ENCODE measurements at regions of chr2 and their contacts with region 1.

Region 1: DNA sequence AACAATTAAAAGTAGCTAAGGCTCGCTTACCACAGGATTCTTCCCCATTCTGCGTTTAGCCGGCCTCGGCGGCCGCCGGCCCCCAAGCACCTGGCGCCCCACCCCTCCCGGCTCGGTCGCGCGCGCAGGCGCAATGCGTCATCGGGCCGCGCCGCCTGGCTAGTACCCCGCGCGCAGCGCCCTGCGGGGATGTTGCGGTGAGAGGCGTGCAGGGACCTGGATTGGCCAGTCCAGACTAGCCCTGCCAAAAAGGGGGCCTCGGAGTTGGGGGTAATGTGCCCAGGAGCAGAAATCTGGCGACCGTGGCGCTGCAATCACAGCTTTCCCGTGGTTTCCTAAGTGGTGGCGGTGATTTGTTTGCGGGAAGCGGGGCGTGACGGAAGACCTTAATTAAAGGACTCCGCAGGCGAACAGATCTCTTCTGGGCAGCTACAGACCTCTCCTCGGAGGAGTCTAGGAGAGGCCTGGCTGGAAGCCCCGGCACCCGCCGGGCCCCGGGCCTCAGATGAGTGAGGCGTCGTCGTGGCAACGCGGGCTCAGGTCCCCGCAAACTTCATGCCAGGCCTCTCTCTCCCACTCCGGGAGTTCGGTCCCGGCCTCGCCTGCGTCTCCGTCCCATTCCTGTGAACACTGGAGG is 606 bp downstream of the TMEM237 start:
- DNase-seq: peak; percentile 92
- ATAC-seq: peak; percentile 86
- H3K4me3 ChIP-seq: peak overlapping the region; percentile 73 to 100 (median 95)
- H3K4me3 Mint-ChIP-seq: peak overlapping the region; percentile 96
- H3K27ac ChIP-seq: peak overlapping the region; percentile 89 to 93
- H3K27ac Mint-ChIP-seq: peak overlapping the region; percentile 97
- H3K4me1 ChIP-seq: peaks cover 10 to 14% of the 10 kb centered on the region in 2 donors
- H3K4me1 Mint-ChIP-seq: peaks cover 12% of the 10 kb centered on the region
- H3K27me3 ChIP-seq: peaks cover 0 to 2% (median 0%) of the 10 kb centered on the region in 4 experiments
- H3K27me3 Mint-ChIP-seq: peaks cover 7% of the 10 kb centered on the region
- CTCF ChIP-seq: no peak

Region 2: GRCh38 chr2:201100497-201100896 is 542.2 kb before region 1 on chr2:
- CTCF ChIA-PET with region 1: no interaction called
- POLR2A ChIA-PET with region 1: no interaction called
- intact Hi-C with region 1: no loop called
- DNase-seq: no peak
- ATAC-seq: no peak
- H3K4me3 ChIP-seq: no peak overlapping the region
- H3K4me3 Mint-ChIP-seq: no peak overlapping the region
- H3K27ac ChIP-seq: no peak overlapping the region
- H3K27ac Mint-ChIP-seq: no peak overlapping the region
- H3K4me1 ChIP-seq: no peaks in the 10 kb centered on the region
- H3K4me1 Mint-ChIP-seq: peaks cover 4% of the 10 kb centered on the region
- H3K27me3 ChIP-seq: no peaks in the 10 kb centered on the region
- H3K27me3 Mint-ChIP-seq: no peaks in the 10 kb centered on the region
- CTCF ChIP-seq: no peak

Region 3: GRCh38 chr2:201572846-201573508 is 69.7 kb before region 1 on chr2:
- CTCF ChIA-PET with region 1: no interaction called
- POLR2A ChIA-PET with region 1: no interaction called
- intact Hi-C with region 1: loop called (anchors 1 kb)
- DNase-seq: peak; percentile 60
- ATAC-seq: peak; percentile 39
- H3K4me3 ChIP-seq: peak overlapping the region in 2 of 5 experiments; percentile 18 to 57
- H3K4me3 Mint-ChIP-seq: peak overlapping the region; percentile 56
- H3K27ac ChIP-seq: peak overlapping the region; percentile 57 to 86
- H3K27ac Mint-ChIP-seq: peak overlapping the region; percentile 94
- H3K4me1 ChIP-seq: peaks cover 29 to 43% of the 10 kb centered on the region in 2 donors
- H3K4me1 Mint-ChIP-seq: peaks cover 36% of the 10 kb centered on the region
- H3K27me3 ChIP-seq: no peaks in the 10 kb centered on the region
- H3K27me3 Mint-ChIP-seq: no peaks in the 10 kb centered on the region
- CTCF ChIP-seq: no peak